Activated B cell treated with CpG ODN at 0.5 μM for 24 hours (primary cell): ENCODE measurements at regions of chr19 and their contacts with region 1.

Region 1: DNA sequence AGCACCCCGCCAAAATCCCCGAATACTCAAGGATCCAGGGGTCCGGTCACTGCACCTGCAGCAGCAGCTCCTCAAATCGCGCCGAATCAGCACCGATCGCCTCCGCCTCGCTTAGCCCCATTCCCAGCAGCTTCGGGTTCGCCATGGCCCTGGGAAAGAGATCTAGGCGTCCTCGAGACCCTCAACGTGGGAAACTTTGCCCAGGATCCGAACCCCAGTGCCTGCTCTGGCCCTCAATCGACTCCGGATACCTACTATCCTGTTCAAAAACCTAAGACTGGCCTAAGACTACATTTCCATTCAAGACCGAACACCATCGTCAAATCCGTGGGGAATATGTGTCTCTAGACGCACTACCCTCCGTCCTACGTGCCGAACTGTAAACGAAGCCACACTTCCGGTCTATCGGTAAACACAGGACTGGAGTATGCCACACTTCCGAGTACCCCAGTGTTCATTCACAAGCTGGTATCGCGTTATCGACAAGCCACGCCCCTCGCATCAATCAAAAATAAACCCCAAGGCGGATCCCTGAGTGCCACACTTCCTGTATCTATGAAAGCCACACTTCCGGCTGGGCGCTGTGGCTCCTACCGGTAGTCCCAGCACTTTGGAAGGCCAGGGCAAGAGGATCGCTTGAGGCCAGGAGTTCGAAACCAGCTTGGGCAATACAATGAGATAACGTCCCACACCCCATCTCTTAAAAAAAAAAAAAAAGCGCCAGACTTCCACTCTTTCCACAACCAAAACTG is at the start of gene PIH1D1:
- DNase-seq: peak; percentile 79
- ATAC-seq: peak; percentile 60
- H3K4me3 Mint-ChIP-seq: peak within 1 kb of the TSS; percentile 99
- H3K27ac Mint-ChIP-seq: peak within 1 kb of the TSS; percentile 100
- H3K4me1 Mint-ChIP-seq: peaks cover 55% of the 10 kb centered on the region
- H3K27me3 Mint-ChIP-seq: no peaks in the 10 kb centered on the region
- CTCF ChIP-seq: no peak
- total RNA-seq, gene PIH1D1: 110 and 111 TPM in 2 replicates

Region 2: GRCh38 chr19:48872182-48872883 is 579.3 kb before region 1 on chr19 and contains the start of gene PPP1R15A:
- CTCF ChIA-PET with region 1: no interaction called
- POLR2A ChIA-PET with region 1: no interaction called
- intact Hi-C with region 1: loop called (anchors 10 kb)
- DNase-seq: peak; percentile 99
- ATAC-seq: peak; percentile 35
- H3K4me3 Mint-ChIP-seq: peak within 1 kb of the TSS; percentile 100
- H3K27ac Mint-ChIP-seq: peak within 1 kb of the TSS; percentile 100
- H3K4me1 Mint-ChIP-seq: peaks cover 42% of the 10 kb centered on the region
- H3K27me3 Mint-ChIP-seq: no peaks in the 10 kb centered on the region
- CTCF ChIP-seq: no peak
- total RNA-seq, gene PPP1R15A: 115 and 123 TPM in 2 replicates

Region 3: DNA sequence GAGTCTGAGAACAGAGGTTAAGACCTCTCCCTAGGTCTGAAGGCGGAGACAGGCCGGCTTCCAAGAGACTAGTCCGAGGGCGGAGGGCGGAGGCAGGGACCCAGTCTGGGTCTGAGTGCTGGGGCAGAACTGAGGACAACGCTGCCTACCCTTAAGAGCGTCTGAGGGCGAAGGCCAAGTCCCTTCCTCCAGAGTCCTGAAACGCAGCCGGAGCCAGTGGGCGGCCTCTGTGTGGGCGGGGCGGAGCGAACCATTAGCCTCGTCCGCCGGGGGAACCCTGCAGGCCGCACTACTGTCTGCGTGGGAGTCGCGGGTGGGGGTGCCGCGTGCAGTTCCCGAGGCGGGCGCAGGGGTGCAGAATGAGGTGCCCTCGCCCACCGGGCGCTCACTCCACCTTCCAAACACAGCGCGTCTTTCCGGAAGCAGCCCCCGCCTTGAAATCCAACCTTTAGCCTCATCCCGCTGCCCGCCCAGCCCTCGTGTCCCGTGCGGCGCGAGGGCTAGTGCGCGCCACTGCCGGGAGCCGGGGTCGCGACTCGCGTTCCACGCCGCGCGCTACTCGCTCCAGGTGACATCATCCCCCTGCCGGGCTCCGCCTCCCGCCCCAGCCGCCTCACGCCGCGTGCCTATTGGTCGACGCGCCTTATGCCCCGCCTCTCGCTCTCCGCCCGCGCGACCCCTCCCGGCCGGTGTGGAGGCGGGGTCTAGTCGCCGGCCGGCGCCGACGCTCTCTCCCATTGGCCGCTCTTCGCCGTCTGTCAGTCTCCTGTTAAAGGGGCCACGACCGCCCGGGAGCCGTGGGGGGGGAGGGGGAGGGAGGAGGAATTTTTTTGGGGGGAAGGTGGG is 332.8 kb before region 1 on chr19 and contains the start of gene C19orf73:
- CTCF ChIA-PET with region 1: interaction called, 3 read pairs
- POLR2A ChIA-PET with region 1: no interaction called
- intact Hi-C with region 1: loop called (anchors 2 kb)
- DNase-seq: peak; percentile 96
- ATAC-seq: peak; percentile 82
- H3K4me3 Mint-ChIP-seq: peak within 1 kb of the TSS; percentile 84
- H3K27ac Mint-ChIP-seq: peak within 1 kb of the TSS; percentile 87
- H3K4me1 Mint-ChIP-seq: peaks cover 44% of the 10 kb centered on the region
- H3K27me3 Mint-ChIP-seq: peaks cover 7% of the 10 kb centered on the region
- CTCF ChIP-seq: no peak
- total RNA-seq, gene C19orf73: 0.98 and 1.0 TPM in 2 replicates

Region 4: GRCh38 chr19:49391581-49392399 is 59.8 kb before region 1 on chr19:
- CTCF ChIA-PET with region 1: interaction called, 3 read pairs
- POLR2A ChIA-PET with region 1: interaction called, 18 read pairs
- intact Hi-C with region 1: no loop called
- DNase-seq: peak; percentile 67
- ATAC-seq: peak; percentile 51
- H3K4me3 Mint-ChIP-seq: peak overlapping the region; percentile 42
- H3K27ac Mint-ChIP-seq: peak overlapping the region; percentile 84
- H3K4me1 Mint-ChIP-seq: peaks cover 46% of the 10 kb centered on the region
- H3K27me3 Mint-ChIP-seq: no peaks in the 10 kb centered on the region
- CTCF ChIP-seq: peak; percentile 25

Region 5: GRCh38 chr19:49487277-49488045 is 35.9 kb after region 1 on chr19 and contains the start of gene RPL13A:
- CTCF ChIA-PET with region 1: no interaction called
- POLR2A ChIA-PET with region 1: interaction called, 77 read pairs
- intact Hi-C with region 1: loop called (anchors 1 kb)
- DNase-seq: peak; percentile 100
- ATAC-seq: peak; percentile 91
- H3K4me3 Mint-ChIP-seq: peak within 1 kb of the TSS; percentile 93
- H3K27ac Mint-ChIP-seq: peak within 1 kb of the TSS; percentile 91
- H3K4me1 Mint-ChIP-seq: peaks cover 37% of the 10 kb centered on the region
- H3K27me3 Mint-ChIP-seq: peaks cover 2% of the 10 kb centered on the region
- CTCF ChIP-seq: no peak
- total RNA-seq, gene RPL13A: 6,642 and 7,342 TPM in 2 replicates

Region 6: DNA sequence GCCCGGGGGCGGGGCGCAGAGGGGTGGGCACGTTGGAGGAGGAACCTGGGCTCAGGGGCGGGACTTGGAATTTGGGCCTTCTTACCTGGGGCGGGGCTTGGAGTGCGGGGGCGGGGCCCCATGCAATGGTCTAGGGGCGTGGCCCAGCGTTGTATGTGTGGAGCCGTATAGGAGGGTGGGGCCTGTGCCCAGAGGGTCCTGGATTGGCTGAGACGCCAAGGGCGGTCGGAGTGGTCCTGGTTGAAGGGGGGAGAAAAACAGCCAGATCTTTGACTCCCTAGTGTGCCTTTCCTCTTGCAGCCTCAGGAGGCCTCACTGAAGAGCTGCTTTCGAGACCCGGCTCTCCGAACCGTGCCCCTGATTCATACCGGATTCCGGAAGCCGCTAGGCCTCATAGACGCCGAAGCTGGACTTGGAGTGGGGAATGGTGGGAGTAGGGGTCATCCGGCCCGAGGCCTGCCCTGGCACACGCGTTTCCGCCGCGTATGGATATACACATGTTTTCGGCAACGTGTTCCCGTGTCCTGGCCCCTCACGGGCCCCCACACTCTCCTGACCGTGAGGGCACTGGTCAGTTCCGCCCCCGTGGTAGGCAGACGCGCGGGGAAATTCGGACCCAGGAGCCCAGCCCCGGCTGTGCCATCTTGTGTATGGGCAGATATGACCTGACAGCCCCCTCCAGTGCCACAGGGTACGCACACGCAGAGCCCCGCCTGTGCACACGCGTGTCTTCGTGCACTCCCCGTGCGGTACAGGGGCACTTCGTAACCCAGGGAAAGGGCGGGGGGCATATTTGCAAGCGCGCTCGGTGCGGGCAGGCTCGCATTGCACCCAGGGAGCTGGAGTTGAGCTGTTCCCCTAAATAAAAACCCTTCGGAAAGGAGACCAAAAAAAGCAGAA is 138.7 kb after region 1 on chr19:
- CTCF ChIA-PET with region 1: no interaction called
- POLR2A ChIA-PET with region 1: interaction called, 8 read pairs
- intact Hi-C with region 1: loop called (anchors 1 kb)
- DNase-seq: peak; percentile 96
- ATAC-seq: peak; percentile 81
- H3K4me3 Mint-ChIP-seq: peak overlapping the region; percentile 85
- H3K27ac Mint-ChIP-seq: peak overlapping the region; percentile 89
- H3K4me1 Mint-ChIP-seq: peaks cover 34% of the 10 kb centered on the region
- H3K27me3 Mint-ChIP-seq: no peaks in the 10 kb centered on the region
- CTCF ChIP-seq: no peak

Region 7: DNA sequence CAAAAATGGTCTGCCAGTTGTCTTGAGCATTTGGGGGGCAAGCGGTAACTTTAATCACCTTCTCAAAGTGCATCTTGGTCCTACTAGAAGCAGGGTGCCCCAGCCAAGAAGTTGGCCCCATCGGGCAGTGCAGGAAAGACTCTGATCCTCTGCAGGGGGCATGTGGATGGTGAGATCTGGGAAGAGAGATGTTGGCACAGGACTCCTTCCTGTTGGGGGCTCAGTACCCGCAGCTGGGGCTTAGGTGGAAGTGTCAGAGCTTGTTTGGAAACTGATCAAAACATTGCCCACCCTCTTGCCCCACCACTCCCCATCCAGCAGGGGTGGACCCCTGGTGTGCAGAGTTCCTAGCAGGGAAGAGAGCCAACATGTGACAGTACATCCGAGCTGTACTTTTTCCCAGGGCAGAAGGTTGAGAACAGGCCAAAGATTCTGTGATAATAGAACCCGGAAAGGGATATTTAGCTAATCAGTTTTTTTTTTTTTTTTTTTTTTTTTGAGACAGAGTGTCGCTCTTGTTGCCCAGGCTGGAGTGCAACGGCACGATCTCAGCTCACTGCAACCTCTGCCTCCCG is 179.5 kb after region 1 on chr19:
- CTCF ChIA-PET with region 1: no interaction called
- POLR2A ChIA-PET with region 1: no interaction called
- intact Hi-C with region 1: no loop called
- DNase-seq: no peak
- ATAC-seq: no peak
- H3K4me3 Mint-ChIP-seq: no peak overlapping the region
- H3K27ac Mint-ChIP-seq: peak overlapping the region; percentile 30
- H3K4me1 Mint-ChIP-seq: no peaks in the 10 kb centered on the region
- H3K27me3 Mint-ChIP-seq: no peaks in the 10 kb centered on the region
- CTCF ChIP-seq: no peak

Region 8: DNA sequence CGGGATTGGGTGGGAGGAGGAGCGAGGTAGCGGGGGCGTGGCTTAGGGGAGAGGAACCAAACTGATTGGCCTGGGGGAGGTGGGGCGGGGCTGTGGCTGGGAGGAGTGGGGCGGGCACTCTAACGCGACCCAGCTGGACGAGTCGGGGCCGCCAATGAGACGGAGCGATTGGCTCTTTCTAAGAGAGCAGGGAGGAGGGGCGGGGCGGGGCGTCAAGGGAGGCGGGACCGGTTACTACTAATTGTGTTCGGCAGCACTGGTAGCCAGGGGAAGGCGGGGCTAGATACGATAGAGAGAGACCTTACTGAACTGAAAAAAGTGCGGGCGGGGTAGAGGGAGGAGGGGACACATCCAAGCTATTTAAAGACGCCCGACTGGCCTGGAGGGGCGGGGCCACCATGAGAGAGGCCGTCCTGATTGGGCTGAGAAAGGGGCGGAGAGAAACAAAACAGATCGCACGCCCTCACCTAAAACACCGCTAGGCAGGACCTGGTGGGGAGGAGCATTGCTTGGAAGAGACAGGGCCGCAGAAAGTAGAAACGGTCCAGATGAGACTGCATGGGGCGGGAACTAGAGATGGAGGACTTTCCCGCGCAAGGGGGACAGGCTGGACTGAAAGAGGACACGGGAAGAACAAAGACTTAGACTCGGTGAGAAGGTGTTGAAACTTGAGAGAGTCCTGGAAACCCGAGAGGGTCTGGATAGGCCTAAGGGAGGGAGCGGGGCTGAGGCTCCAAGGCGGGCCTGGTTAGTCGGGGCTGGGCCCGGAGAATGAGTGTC is 877.7 kb after region 1 on chr19 and contains the start of gene KCNC3:
- CTCF ChIA-PET with region 1: no interaction called
- POLR2A ChIA-PET with region 1: no interaction called
- intact Hi-C with region 1: loop called (anchors 5 kb)
- DNase-seq: peak; percentile 91
- ATAC-seq: peak; percentile 64
- H3K4me3 Mint-ChIP-seq: peak within 1 kb of the TSS; percentile 93
- H3K27ac Mint-ChIP-seq: peak within 1 kb of the TSS; percentile 98
- H3K4me1 Mint-ChIP-seq: peaks cover 78% of the 10 kb centered on the region
- H3K27me3 Mint-ChIP-seq: peaks cover 5% of the 10 kb centered on the region
- CTCF ChIP-seq: no peak
- total RNA-seq, gene KCNC3: 34.5 and 44.3 TPM in 2 replicates